ENCODE measurements at regions of chr10 and their contacts with region 1.

Region 1: GRCh38 chr10:73956476-73957359 is 41.2 kb upstream of the VCL start:
- DNase-seq: peak; percentile 38 to 63 (median 46)
- H3K4me3 ChIP-seq: peak overlapping the region in 1 of 3 experiments; percentile 59
- H3K4me3 Mint-ChIP-seq: peak overlapping the region; percentile 67 to 86
- H3K27ac ChIP-seq: peak overlapping the region; percentile 77 to 82
- H3K27ac Mint-ChIP-seq: peak overlapping the region; percentile 89 to 97 (median 95)
- H3K4me1 ChIP-seq: peaks cover 56 to 68% of the 10 kb centered on the region in 2 donors
- H3K4me1 Mint-ChIP-seq: peaks cover 62% of the 10 kb centered on the region
- H3K27me3 ChIP-seq: no peaks in the 10 kb centered on the region
- H3K27me3 Mint-ChIP-seq: no peaks in the 10 kb centered on the region
- CTCF ChIP-seq: no peak

Region 2: GRCh38 chr10:73379064-73379748 is 577.5 kb before region 1 on chr10:
- intact Hi-C with region 1: no loop called
- DNase-seq: no peak
- H3K4me3 ChIP-seq: no peak overlapping the region
- H3K4me3 Mint-ChIP-seq: no peak overlapping the region
- H3K27ac ChIP-seq: no peak overlapping the region
- H3K27ac Mint-ChIP-seq: peak overlapping the region in 2 of 7 donors; percentile 3 to 72
- H3K4me1 ChIP-seq: no peaks in the 10 kb centered on the region
- H3K4me1 Mint-ChIP-seq: no peaks in the 10 kb centered on the region
- H3K27me3 ChIP-seq: no peaks in the 10 kb centered on the region
- H3K27me3 Mint-ChIP-seq: no peaks in the 10 kb centered on the region
- CTCF ChIP-seq: no peak

Region 3: GRCh38 chr10:73991884-73992245 is 35.1 kb after region 1 on chr10:
- intact Hi-C with region 1: loop called (anchors 5 kb)
- DNase-seq: peak; percentile 78 to 87 (median 83)
- H3K4me3 ChIP-seq: peak overlapping the region in 1 of 3 experiments; percentile 48
- H3K4me3 Mint-ChIP-seq: peak overlapping the region; percentile 34 to 41
- H3K27ac ChIP-seq: peak overlapping the region; percentile 95
- H3K27ac Mint-ChIP-seq: peak overlapping the region; percentile 96 to 100 (median 99)
- H3K4me1 ChIP-seq: peaks cover 51 to 55% of the 10 kb centered on the region in 2 donors
- H3K4me1 Mint-ChIP-seq: peaks cover 51% of the 10 kb centered on the region
- H3K27me3 ChIP-seq: no peaks in the 10 kb centered on the region
- H3K27me3 Mint-ChIP-seq: peaks cover 0 to 5% (median 0%) of the 10 kb centered on the region in 3 donors
- CTCF ChIP-seq: no peak